IMR-90 (cell line): ENCODE measurements at regions of chr18 and their contacts with region 1.

Region 1: DNA sequence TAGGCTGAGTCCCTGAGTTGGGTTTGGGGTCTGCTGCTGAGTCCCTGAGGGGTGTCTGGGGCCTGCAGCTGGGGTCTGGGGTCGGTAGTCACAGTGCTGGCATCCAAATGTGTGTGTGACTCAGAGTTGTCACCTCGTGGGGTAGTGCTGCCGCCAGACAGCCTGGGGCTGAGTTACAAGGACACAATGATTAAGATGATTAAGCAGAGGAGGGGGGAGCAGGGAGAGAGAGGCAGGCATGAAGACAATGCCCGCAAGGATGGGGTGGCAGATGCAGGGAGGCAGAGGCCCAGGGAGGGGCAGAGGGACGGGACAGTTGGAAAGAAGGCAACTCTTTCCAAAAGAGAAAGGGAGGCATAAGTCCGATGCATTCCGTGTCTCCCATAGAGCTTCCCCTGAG is 120.2 kb downstream of the CELF4 start:
- DNase-seq: no peak
- ATAC-seq: no peak
- H3K4me3 ChIP-seq: no peak overlapping the region
- H3K27ac ChIP-seq: no peak overlapping the region
- H3K4me1 ChIP-seq: no peaks in the 10 kb centered on the region; the same call in 1 of the 2 replicates
- H3K27me3 ChIP-seq: peaks cover 12% of the 10 kb centered on the region; the same call in 1 of the 2 replicates
- CTCF ChIP-seq: no peak
- POLR2A ChIP-seq: no peak
- RAD21 ChIP-seq: no peak

Region 2: DNA sequence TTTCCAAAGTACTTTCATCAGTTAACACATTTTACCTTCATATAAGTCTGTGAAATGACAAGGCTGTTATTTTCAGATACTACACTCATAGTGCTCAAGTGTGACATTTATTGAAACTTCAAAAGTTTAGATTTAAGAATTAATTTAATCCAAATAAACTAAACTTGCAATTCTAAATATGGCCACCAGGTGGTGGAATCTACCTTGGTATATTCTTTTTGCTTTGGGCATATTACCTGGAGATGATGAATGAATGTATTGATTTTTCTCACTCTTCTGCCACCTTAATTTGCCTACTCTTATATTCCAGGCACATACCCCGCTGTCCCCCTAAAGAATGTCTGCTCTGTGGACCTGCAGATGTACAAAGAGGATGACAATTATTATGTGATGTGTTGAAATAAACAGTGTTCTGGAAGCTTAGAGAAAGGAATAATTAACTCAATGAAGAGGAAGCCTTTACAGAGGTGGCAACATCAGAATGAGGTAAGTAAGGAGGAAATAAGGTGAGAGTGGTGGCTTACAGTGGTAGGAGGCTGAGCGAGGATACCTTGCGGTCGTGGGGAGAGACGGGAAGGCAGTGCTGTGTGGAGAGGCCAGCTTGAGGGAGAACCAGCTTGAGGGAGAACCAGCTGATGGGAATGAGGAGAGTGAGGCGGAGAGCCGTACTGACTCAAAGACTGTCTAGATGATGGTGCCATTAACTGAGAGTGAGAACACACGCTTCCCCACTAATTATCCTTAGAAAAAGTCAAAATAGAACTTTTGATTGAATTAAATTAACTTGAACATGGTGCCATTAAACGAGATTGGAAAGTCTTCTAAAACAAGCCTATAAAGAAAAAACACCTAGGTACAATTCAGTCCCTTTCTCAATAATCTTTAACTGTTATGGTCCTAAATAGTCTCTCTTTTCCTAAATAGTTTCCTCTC is 59.3 kb before region 1 on chr18:
- CTCF ChIA-PET with region 1: no interaction called
- POLR2A ChIA-PET with region 1: no interaction called
- dilution Hi-C with region 1: no loop called
- in situ Hi-C with region 1: loop called (anchors 10 kb)
- intact Hi-C with region 1: loop called (anchors 2 kb)
- DNase-seq: peak; percentile 37
- ATAC-seq: peak; percentile 40
- H3K4me3 ChIP-seq: no peak overlapping the region
- H3K27ac ChIP-seq: no peak overlapping the region
- H3K4me1 ChIP-seq: no peaks in the 10 kb centered on the region
- H3K27me3 ChIP-seq: peaks cover 19% of the 10 kb centered on the region
- CTCF ChIP-seq: peak; percentile 86
- POLR2A ChIP-seq: no peak
- RAD21 ChIP-seq: peak; percentile 89

Region 3: DNA sequence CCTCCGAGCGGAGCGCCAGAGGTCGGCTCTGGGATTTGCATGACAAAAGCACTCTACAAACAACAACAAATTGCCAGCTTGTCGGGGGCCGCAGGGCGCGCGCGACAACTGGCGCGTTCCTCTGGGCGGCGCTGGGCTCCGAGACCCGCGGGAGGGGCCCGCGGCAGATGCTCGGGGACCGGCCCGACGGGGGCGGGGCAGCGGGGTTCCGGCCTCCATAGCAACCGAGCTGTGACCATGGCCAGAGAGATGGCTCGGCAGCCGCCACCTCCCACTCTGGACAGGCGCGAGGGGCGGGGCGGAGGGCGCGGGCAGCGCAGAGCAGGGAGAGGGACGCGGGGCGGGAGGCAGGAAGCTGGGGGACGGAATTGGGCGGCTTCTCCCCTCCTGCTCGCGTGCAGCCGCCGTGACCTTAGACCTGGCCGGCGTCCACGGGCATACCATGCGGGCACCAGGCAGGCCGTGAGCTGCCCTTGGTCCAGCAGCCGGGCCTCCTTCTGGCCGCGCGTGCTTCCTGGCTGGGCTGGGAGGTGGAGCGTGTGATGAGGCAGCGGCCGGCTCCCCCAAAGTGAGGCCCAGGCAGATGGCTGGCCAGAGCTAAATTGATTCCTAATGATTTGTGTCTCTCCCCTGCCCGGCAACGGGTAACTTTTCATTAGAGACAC is 51.3 kb before region 1 on chr18:
- CTCF ChIA-PET with region 1: no interaction called
- POLR2A ChIA-PET with region 1: no interaction called
- dilution Hi-C with region 1: no loop called
- in situ Hi-C with region 1: loop called (anchors 10 kb)
- intact Hi-C with region 1: no loop called
- DNase-seq: peak; percentile 76
- ATAC-seq: peak; percentile 96
- H3K4me3 ChIP-seq: peak overlapping the region; percentile 29
- H3K27ac ChIP-seq: peak overlapping the region; percentile 87
- H3K4me1 ChIP-seq: peaks cover 20% of the 10 kb centered on the region
- H3K27me3 ChIP-seq: peaks cover 4% of the 10 kb centered on the region; the same call in 1 of the 2 replicates
- CTCF ChIP-seq: 0 out of 2 replicates have a peak, but pooled peaks have one; percentile 3
- POLR2A ChIP-seq: no peak
- RAD21 ChIP-seq: no peak

Region 4: DNA sequence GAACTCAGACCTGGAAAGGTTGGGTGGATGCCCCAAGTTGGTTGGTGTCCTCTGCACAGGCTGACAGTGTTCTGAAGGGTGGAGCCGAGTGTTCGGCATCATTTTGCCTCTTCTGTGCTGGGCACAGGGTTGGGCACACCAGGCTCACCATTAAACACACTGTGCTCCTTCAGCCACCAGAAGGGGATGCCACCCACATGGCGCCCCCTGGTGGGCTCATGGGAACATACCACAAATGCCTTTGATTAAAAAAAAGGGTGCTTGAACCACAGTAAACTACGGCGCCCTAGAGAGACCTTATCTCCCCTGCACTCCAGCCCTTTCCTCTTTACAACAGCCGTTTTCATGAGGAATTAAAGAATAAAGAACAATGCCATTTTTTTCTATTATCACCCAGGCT is 30.8 kb after region 1 on chr18:
- CTCF ChIA-PET with region 1: interaction called, 3 read pairs
- POLR2A ChIA-PET with region 1: no interaction called
- dilution Hi-C with region 1: no loop called
- in situ Hi-C with region 1: no loop called
- intact Hi-C with region 1: loop called (anchors 1 kb)
- DNase-seq: peak; percentile 14
- ATAC-seq: peak; percentile 68
- H3K4me3 ChIP-seq: no peak overlapping the region
- H3K27ac ChIP-seq: no peak overlapping the region
- H3K4me1 ChIP-seq: no peaks in the 10 kb centered on the region
- H3K27me3 ChIP-seq: peaks cover 30% of the 10 kb centered on the region
- CTCF ChIP-seq: peak; percentile 67
- POLR2A ChIP-seq: no peak
- RAD21 ChIP-seq: peak; percentile 70

Region 5: GRCh38 chr18:37537868-37538525 is 92.6 kb after region 1 on chr18:
- CTCF ChIA-PET with region 1: no interaction called
- POLR2A ChIA-PET with region 1: no interaction called
- dilution Hi-C with region 1: no loop called
- in situ Hi-C with region 1: no loop called
- intact Hi-C with region 1: loop called (anchors 1 kb)
- DNase-seq: peak; percentile 44
- ATAC-seq: peak; percentile 98
- H3K4me3 ChIP-seq: no peak overlapping the region
- H3K27ac ChIP-seq: no peak overlapping the region
- H3K4me1 ChIP-seq: no peaks in the 10 kb centered on the region
- H3K27me3 ChIP-seq: peaks cover 28% of the 10 kb centered on the region; the same call in 1 of the 2 replicates
- CTCF ChIP-seq: peak; percentile 83
- POLR2A ChIP-seq: no peak
- RAD21 ChIP-seq: peak; percentile 82